ENCODE measurements at regions of chr11 and their contacts with region 1.

Region 1: GRCh38 chr11:19093976-19094375 is 23.0 kb upstream of the ZDHHC13 start:
- DNase-seq: no peak
- ATAC-seq: peak; percentile 44

Region 2: DNA sequence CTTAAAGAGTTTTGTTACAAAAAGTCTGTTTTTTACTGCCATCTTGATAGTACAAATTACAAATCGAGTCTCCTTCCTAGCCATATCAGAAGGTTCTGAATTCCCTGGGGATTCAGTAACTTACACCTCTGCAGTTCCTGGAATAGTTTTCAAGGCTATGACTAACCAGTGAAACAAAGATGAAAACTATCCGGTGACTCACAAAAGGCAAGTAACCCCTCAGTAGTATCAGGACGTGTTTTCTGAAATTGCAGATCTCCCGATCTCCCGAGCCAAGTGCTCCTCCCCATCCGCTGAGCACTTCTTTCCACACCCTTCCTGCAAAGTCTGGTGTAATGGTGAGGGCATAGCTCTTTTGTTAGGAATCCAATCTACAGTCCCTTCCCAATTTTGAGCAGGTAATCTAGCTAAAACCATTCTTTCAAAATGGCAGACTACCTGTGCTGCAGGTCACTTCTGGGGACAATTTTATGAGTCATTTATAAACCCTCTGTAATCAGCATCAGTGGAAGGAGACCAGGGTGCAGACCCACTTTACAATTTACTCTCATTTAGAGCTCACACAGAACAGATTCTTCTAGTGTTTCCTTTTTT is 139.0 kb after region 1 on chr11:
- intact Hi-C with region 1: loop called in 1 of 2 experiments (anchors 10 kb)
- DNase-seq: no peak
- ATAC-seq: no peak

Measured in left colon (tissue), 2 donors.